ENCODE measurements at regions of chr6 and their contacts with region 1.

Region 1: GRCh38 chr6:24581084-24581669 is 64.8 kb downstream of the KIAA0319 start:
- DNase-seq: peak; percentile 55 to 83 (median 67)
- H3K4me3 ChIP-seq: no peak overlapping the region
- H3K4me3 Mint-ChIP-seq: no peak overlapping the region
- H3K27ac ChIP-seq: no peak overlapping the region
- H3K27ac Mint-ChIP-seq: no peak overlapping the region
- H3K4me1 ChIP-seq: peaks cover 5% of the 10 kb centered on the region
- H3K4me1 Mint-ChIP-seq: peaks cover 4 to 6% (median 4%) of the 10 kb centered on the region in 3 donors
- H3K27me3 ChIP-seq: no peaks in the 10 kb centered on the region
- H3K27me3 Mint-ChIP-seq: peaks cover 0 to 8% of the 10 kb centered on the region in 2 donors

Region 2: GRCh38 chr6:24440897-24441598 is 140.1 kb before region 1 on chr6:
- CTCF ChIA-PET with region 1: no interaction called
- POLR2A ChIA-PET with region 1: no interaction called
- DNase-seq: no peak
- H3K4me3 ChIP-seq: no peak overlapping the region
- H3K4me3 Mint-ChIP-seq: no peak overlapping the region
- H3K27ac ChIP-seq: no peak overlapping the region
- H3K27ac Mint-ChIP-seq: peak overlapping the region in 1 of 8 donors; percentile 10
- H3K4me1 ChIP-seq: no peaks in the 10 kb centered on the region
- H3K4me1 Mint-ChIP-seq: no peaks in the 10 kb centered on the region
- H3K27me3 ChIP-seq: no peaks in the 10 kb centered on the region
- H3K27me3 Mint-ChIP-seq: no peaks in the 10 kb centered on the region

Region 3: DNA sequence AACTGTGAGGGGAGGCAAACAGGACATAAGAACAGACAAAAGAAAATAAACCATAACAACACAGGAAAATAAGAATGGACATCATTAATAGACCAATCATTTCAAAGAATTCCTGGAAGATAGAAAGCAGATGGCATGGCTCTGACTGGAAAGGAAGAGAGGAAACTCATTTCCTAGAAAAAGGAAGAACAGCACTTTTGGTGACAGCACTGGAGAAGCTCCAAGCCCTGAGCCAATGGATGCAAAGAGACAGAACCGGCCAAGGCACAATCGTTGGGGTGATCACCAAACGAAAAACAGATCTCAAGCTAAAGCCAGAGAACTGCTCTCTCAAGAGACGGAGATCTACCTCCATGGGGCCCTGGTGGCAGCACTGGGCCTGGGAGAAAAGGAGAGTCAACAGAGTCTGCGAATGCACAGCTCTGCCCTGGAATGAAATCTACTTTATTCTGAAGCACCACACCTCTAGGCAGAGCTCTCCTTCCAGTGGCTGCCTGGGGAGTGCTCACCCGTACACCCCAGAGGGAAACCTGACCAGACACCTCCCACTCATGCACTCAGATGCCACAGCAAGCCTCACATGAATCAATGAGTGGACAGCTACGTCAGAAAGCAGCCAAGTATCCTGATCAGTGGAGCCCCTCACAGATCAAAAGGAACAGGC is 40.6 kb after region 1 on chr6:
- CTCF ChIA-PET with region 1: no interaction called
- POLR2A ChIA-PET with region 1: no interaction called
- DNase-seq: no peak
- H3K4me3 ChIP-seq: no peak overlapping the region
- H3K4me3 Mint-ChIP-seq: no peak overlapping the region
- H3K27ac ChIP-seq: no peak overlapping the region
- H3K27ac Mint-ChIP-seq: no peak overlapping the region
- H3K4me1 ChIP-seq: no peaks in the 10 kb centered on the region
- H3K4me1 Mint-ChIP-seq: no peaks in the 10 kb centered on the region
- H3K27me3 ChIP-seq: no peaks in the 10 kb centered on the region
- H3K27me3 Mint-ChIP-seq: peaks cover 2 to 11% of the 10 kb centered on the region in 2 donors

Region 4: DNA sequence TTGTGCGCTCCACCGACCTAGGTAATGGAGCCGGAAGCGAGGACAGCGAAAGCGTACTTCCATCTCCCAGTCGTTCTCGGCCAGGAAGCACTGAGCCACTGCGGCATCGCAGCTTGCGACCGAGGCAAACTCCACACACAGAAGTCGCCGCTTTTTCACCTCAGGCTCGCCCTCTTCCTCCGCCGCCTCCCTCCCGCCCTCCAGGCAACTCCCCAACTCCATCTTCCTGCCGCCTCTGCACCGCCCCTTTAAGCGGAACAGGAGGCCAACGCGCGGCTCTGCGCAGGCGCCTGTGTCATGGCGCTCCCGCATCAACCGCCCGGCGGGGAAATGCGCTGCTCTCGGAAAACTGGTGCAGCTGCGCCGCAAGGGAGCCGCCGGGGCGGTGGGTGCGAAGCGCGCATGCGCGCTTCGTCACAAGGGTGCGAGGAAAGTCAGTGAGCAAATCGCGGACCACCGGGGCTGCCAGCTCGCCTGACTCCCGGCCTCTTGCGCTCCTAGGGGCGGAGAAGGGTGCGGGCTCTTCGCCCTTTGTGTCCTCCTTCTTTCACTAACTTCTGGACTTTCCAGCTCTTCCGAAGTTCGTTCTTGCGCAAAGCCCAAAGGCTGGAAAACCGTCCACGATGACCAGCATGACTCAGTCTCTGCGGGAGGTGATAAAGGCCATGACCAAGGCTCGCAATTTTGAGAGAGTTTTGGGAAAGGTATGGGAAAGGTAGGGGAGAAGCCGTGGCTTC is 85.6 kb after region 1 on chr6 and contains the starts of genes ACOT13 and TDP2:
- CTCF ChIA-PET with region 1: interaction called, 17 read pairs
- POLR2A ChIA-PET with region 1: interaction called, 6 read pairs
- DNase-seq: peak; percentile 94 to 98 (median 97)
- H3K4me3 ChIP-seq: peak within 1 kb of the TSS; percentile 78
- H3K4me3 Mint-ChIP-seq: peak within 1 kb of the TSS; percentile 97 to 100 (median 99)
- H3K27ac ChIP-seq: peak within 1 kb of the TSS; percentile 89
- H3K27ac Mint-ChIP-seq: peak within 1 kb of the TSS; percentile 90 to 99 (median 98)
- H3K4me1 ChIP-seq: peaks cover 39% of the 10 kb centered on the region
- H3K4me1 Mint-ChIP-seq: peaks cover 43 to 76% (median 64%) of the 10 kb centered on the region in 3 donors
- H3K27me3 ChIP-seq: no peaks in the 10 kb centered on the region
- H3K27me3 Mint-ChIP-seq: no peaks in the 10 kb centered on the region
- total RNA-seq, gene ACOT13: 19.6 to 25.3 TPM
- total RNA-seq, gene TDP2: 49.8 to 50.6 TPM

Region 5: GRCh38 chr6:24689964-24690363 is 108.8 kb after region 1 on chr6:
- CTCF ChIA-PET with region 1: interaction called, 14 read pairs
- POLR2A ChIA-PET with region 1: no interaction called
- DNase-seq: no peak
- H3K4me3 ChIP-seq: no peak overlapping the region
- H3K4me3 Mint-ChIP-seq: no peak overlapping the region
- H3K27ac ChIP-seq: no peak overlapping the region
- H3K27ac Mint-ChIP-seq: no peak overlapping the region
- H3K4me1 ChIP-seq: no peaks in the 10 kb centered on the region
- H3K4me1 Mint-ChIP-seq: peaks cover 2 to 10% (median 9%) of the 10 kb centered on the region in 3 donors
- H3K27me3 ChIP-seq: no peaks in the 10 kb centered on the region
- H3K27me3 Mint-ChIP-seq: no peaks in the 10 kb centered on the region

Region 6: DNA sequence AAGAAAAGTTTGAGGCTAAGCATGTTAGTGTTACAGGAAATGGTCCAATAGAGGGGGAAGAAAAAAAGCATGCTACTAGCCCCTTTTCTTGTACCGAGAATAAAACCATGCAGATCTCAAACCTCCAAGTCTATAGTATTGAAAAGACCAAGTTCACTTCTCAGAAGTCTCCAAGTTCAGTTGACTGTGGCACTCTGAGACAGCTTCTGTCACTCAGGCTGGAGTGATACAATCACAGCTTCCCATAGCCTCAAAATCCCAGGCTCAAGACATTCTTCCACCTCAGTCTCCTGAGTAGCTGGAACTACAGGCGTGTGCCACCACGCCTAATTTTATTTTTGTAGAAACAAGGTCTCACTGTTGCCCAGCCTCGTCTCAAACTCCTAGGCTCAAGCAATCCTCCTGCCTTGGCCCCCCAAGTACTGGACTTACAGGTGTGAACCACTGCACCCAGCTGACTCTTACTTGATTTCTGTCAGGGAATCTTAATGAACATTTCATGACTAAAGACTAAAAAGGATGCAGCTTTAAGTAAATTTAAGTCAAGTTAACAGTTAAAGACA is 121.6 kb after region 1 on chr6:
- CTCF ChIA-PET with region 1: interaction called, 10 read pairs
- POLR2A ChIA-PET with region 1: interaction called, 4 read pairs
- DNase-seq: no peak
- H3K4me3 ChIP-seq: no peak overlapping the region
- H3K4me3 Mint-ChIP-seq: no peak overlapping the region
- H3K27ac ChIP-seq: no peak overlapping the region
- H3K27ac Mint-ChIP-seq: peak overlapping the region; percentile 42 to 89 (median 64)
- H3K4me1 ChIP-seq: no peaks in the 10 kb centered on the region
- H3K4me1 Mint-ChIP-seq: peaks cover 14 to 47% (median 44%) of the 10 kb centered on the region in 3 donors
- H3K27me3 ChIP-seq: no peaks in the 10 kb centered on the region
- H3K27me3 Mint-ChIP-seq: no peaks in the 10 kb centered on the region

Region 7: DNA sequence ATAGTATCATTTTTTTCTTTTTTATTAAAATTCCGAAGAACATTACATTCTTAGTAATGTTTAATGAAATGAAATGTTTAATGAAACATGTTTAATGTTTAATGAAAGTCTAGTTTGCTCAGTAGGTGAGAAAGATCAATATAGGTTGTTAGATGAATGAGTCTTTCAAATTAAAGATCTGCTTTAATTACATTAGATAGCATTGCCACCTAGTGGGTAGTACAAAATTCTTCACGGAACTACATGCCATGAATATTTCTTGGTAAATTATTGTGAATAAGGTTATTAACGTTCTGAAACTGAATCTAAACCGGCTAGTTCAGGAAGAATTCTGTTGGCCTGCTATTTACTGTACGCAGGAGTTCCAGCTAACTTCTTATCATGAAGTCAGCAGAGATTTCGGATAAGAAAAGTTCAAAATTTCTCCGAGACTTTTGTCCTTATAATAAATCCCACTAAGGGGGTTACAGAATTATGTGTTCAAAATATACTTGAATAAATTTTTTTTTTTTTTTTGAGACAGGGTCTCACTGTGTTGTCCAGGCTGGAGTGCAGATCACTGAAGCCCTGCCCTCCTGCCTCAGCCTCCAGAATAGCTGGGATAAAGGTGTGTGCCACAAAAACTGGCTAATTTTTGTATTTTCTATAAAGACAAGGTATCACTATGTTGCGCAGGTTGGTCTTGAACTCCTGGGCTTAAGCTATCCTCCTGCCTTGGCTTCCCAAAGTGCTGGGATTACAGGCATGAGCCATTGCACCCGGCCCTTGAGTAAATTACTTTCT is 185.7 kb after region 1 on chr6:
- CTCF ChIA-PET with region 1: interaction called, 13 read pairs
- POLR2A ChIA-PET with region 1: no interaction called
- DNase-seq: peak in 2 of 5 donors; percentile 23 to 40
- H3K4me3 ChIP-seq: no peak overlapping the region
- H3K4me3 Mint-ChIP-seq: no peak overlapping the region
- H3K27ac ChIP-seq: no peak overlapping the region
- H3K27ac Mint-ChIP-seq: no peak overlapping the region
- H3K4me1 ChIP-seq: no peaks in the 10 kb centered on the region
- H3K4me1 Mint-ChIP-seq: peaks cover 0 to 2% (median 0%) of the 10 kb centered on the region in 3 donors
- H3K27me3 ChIP-seq: no peaks in the 10 kb centered on the region
- H3K27me3 Mint-ChIP-seq: no peaks in the 10 kb centered on the region

Measured in CD8-positive, alpha-beta memory T cell (primary cell).